WTC11 (cell line): ENCODE measurements at regions of chr11 and their contacts with region 1.

Region 1: DNA sequence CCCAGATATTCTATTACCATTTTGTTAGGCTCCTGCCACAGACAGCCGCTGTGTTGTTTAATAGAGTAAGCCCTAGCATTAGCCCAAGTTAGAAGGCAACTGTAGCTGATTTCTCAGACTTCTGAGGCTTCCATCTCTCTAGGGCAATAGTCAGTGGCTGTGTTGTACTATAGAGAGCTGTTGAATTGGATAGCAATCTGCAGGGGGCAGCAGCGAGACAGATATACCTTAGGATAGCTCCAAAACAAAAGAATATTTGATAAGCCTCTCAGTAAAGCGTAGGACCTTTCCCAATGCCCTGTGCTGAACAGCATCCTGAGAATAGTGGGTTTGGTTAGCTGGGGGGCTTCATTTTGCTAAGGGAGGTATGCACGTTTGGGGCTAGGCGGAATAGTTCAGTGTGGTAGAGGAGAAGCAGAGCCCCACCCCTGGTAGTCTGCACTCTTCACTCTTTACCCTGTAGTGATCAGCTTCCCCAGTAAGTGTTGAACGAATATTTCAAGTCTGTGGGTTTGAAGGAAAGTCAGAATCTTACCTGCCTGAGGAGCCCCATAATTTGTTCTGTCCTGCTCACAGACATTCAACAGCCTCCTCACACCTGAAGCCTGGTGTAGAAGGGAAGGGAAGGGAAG is 515.1 kb downstream of the INSC start:
- DNase-seq: peak; percentile 74
- ATAC-seq: peak; percentile 98
- H3K4me3 Mint-ChIP-seq: no peak overlapping the region
- H3K27ac Mint-ChIP-seq: no peak overlapping the region
- H3K4me1 Mint-ChIP-seq: peaks cover 13% of the 10 kb centered on the region
- H3K27me3 Mint-ChIP-seq: peaks cover 3% of the 10 kb centered on the region; the same call in 1 of the 2 replicates
- CTCF ChIP-seq: peak; percentile 33

Region 2: DNA sequence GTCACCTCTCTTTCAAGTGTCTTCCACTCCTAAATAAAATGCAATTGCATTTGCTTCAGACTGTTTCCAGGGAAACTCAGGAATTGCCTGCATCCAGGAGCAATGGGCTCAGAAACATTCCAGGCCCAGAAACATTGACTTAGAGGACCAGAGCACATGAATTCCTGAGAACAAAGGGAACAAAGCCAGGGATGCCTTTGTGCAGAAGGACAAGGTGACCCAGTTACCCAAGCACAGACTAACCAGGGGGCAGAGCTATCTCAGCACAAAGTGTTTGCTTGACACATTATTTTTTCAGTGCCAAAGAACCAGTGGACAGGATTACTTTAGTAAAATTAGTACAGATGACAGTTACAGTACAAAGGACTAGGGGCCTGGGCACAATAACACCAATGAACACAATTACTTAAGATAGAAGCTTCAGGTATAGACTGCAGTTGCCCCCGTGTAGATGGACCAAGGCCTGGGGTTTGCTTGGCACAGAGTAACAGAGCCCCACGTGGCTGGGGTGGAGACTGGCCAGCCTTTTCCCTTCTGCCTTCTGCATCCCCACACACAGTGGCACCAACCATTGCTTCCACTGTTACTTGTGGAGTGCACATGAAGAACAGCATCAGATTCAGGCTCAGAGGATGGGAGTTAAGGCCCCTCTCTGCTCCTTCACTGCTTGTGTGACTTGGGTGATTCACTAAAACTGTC is 14.3 kb before region 1 on chr11:
- CTCF ChIA-PET with region 1: interaction called, 15 read pairs
- POLR2A ChIA-PET with region 1: no interaction called
- DNase-seq: no peak
- ATAC-seq: peak; percentile 43
- H3K4me3 Mint-ChIP-seq: no peak overlapping the region
- H3K27ac Mint-ChIP-seq: 0 out of 2 replicates have a peak overlapping the region, but pooled peaks have one; percentile 37
- H3K4me1 Mint-ChIP-seq: peaks cover 17% of the 10 kb centered on the region
- H3K27me3 Mint-ChIP-seq: no peaks in the 10 kb centered on the region; the same call in 1 of the 2 replicates
- CTCF ChIP-seq: no peak

Region 3: DNA sequence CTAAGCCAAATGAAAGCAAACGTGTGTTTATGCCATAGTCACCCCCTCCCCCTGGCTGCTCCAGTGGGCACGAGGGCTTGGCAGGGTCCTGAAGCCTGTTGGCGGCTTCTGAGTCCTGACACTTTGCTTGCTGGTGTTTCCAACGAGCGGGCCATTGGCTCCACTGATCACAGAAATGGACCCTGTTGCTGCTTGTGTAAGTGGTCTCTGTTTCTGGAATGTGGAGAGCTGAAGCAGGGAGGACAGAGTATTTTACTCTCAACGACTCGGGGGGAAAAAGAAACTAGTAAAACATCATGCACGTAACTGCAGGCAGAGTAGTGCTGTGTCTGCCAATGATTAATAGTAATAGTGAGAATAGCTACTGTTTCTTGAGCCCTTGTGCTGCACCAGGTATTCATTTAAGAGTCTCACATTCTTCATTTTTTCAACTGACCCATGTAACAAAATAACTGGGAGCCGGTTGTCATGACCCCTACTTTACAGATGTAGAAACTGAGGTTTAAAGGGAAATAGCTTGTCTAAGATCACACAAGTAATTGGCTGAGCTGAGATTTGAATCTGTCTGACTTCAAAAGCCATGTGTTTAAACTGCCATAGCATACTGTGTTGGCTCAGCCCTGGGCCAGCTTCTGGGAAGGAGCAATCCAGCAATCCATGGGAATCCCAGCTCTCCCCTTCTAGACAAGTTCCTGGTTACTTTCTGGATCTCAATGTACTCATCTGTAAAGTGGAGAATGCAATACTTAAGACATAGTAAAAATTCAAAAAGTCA is 11.7 kb after region 1 on chr11:
- CTCF ChIA-PET with region 1: interaction called, 15 read pairs
- POLR2A ChIA-PET with region 1: no interaction called
- DNase-seq: no peak
- ATAC-seq: no peak
- H3K4me3 Mint-ChIP-seq: no peak overlapping the region
- H3K27ac Mint-ChIP-seq: no peak overlapping the region
- H3K4me1 Mint-ChIP-seq: peaks cover 6% of the 10 kb centered on the region
- H3K27me3 Mint-ChIP-seq: no peaks in the 10 kb centered on the region
- CTCF ChIP-seq: no peak

Region 4: DNA sequence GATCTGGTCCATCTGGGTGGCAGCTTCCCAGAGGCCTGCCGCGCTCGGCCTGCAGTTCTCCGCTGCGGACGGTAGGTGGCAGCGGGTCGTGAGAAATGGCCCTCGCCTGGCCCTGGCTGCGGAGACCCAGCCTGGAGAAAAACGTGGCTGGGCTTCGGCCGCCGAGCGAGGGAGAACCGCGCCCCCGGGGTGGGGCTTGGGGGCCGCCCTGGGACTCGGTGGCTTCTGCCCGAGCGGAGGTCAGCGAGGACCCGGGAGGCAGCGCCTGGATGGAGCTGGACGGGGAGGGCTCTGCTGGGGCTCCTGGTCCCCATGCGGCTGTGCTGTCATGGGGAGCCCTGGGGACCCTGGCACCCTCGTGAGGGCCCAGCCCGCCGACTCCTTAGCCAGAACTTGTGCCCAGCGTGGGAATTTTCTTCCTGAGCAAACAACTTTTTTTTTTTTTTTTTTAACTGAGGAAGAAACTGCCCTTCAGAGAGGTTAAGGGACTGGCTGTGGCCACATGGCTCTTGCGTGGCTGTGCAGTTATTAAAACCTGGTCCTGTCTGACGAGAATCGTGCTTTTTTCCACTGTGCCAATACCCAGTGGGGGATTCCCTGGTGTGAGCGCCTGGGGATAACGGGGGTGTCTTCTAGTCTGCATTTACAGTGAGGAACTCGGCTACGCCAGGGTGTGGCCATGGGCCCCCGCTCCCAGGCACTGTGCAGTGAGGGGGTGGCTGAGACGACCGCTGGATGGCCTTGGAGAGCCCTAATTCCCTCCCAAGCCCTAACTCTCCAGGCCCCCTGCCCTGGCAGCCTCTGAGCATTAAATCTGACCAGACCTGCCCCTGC is 20.5 kb after region 1 on chr11:
- CTCF ChIA-PET with region 1: interaction called, 18 read pairs
- POLR2A ChIA-PET with region 1: no interaction called
- DNase-seq: peak; percentile 97
- ATAC-seq: peak; percentile 97
- H3K4me3 Mint-ChIP-seq: peak overlapping the region; percentile 47
- H3K27ac Mint-ChIP-seq: no peak overlapping the region
- H3K4me1 Mint-ChIP-seq: peaks cover 22% of the 10 kb centered on the region
- H3K27me3 Mint-ChIP-seq: no peaks in the 10 kb centered on the region; the same call in 1 of the 2 replicates
- CTCF ChIP-seq: peak; percentile 71